Calu3 (cell line): ENCODE measurements at regions of chr1 and their contacts with region 1.

Region 1: GRCh38 chr1:110209715-110210603 is at the start of gene KCNC4:
- DNase-seq: peak; percentile 85
- H3K4me3 Mint-ChIP-seq: peak within 1 kb of the TSS; percentile 92
- H3K27ac Mint-ChIP-seq: peak within 1 kb of the TSS; percentile 72
- H3K4me1 Mint-ChIP-seq: peaks cover 30% of the 10 kb centered on the region
- H3K27me3 Mint-ChIP-seq: no peaks in the 10 kb centered on the region
- CTCF ChIP-seq: no peak
- total RNA-seq, gene KCNC4: 16.0 and 24.3 TPM in 2 replicates

Region 2: GRCh38 chr1:109509176-109510134 is 700.5 kb before region 1 on chr1 and contains the start of gene AMIGO1:
- CTCF ChIA-PET with region 1: no interaction called
- intact Hi-C with region 1: no loop called
- DNase-seq: peak; percentile 48
- H3K4me3 Mint-ChIP-seq: peak within 1 kb of the TSS; percentile 64
- H3K27ac Mint-ChIP-seq: peak within 1 kb of the TSS; percentile 58
- H3K4me1 Mint-ChIP-seq: peaks cover 9% of the 10 kb centered on the region
- H3K27me3 Mint-ChIP-seq: peaks cover 40% of the 10 kb centered on the region
- CTCF ChIP-seq: no peak
- total RNA-seq, gene AMIGO1: 1.3 and 1.5 TPM in 2 replicates

Region 3: GRCh38 chr1:110188035-110188618 is 21.8 kb before region 1 on chr1:
- CTCF ChIA-PET with region 1: no interaction called
- intact Hi-C with region 1: no loop called
- DNase-seq: no peak
- H3K4me3 Mint-ChIP-seq: no peak overlapping the region
- H3K27ac Mint-ChIP-seq: no peak overlapping the region
- H3K4me1 Mint-ChIP-seq: no peaks in the 10 kb centered on the region
- H3K27me3 Mint-ChIP-seq: peaks cover 50% of the 10 kb centered on the region
- CTCF ChIP-seq: no peak

Region 4: DNA sequence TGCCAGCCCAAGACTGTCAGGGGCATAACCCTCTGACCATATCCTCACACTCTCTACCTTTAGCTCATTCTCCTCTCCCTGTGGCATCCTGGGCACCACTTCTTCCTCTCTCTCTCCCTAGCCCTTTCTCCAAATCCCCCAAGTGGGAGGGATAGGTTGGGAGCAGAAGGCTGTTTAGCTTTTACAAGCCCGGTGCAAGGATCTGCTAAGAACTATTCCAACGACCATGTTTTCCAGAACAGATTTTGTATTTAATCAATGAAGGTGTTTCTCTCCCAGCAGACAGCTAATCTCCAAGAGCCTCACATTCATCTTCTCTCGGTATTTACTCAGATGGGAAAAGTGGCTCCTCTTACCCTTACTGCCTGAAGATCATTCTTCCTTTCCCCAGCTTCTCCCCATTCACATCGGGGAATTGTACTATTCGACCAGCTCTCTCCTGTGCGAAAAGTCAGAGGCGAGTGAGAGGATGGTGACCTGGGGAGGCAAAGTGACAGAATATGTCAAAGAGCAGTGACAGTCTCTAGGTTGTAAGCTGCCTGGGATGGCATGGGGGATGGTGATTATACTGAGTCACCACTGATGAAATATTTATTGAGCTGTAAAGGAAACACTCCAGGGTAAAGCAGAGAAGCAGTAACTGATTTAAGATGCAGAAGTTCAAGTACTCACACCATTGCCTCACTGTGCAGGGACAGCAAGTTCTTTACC is 82.2 kb after region 1 on chr1:
- CTCF ChIA-PET with region 1: no interaction called
- intact Hi-C with region 1: loop called (anchors 5 kb)
- DNase-seq: peak; percentile 14
- H3K4me3 Mint-ChIP-seq: no peak overlapping the region
- H3K27ac Mint-ChIP-seq: no peak overlapping the region
- H3K4me1 Mint-ChIP-seq: peaks cover 19% of the 10 kb centered on the region
- H3K27me3 Mint-ChIP-seq: no peaks in the 10 kb centered on the region
- CTCF ChIP-seq: no peak

Region 5: DNA sequence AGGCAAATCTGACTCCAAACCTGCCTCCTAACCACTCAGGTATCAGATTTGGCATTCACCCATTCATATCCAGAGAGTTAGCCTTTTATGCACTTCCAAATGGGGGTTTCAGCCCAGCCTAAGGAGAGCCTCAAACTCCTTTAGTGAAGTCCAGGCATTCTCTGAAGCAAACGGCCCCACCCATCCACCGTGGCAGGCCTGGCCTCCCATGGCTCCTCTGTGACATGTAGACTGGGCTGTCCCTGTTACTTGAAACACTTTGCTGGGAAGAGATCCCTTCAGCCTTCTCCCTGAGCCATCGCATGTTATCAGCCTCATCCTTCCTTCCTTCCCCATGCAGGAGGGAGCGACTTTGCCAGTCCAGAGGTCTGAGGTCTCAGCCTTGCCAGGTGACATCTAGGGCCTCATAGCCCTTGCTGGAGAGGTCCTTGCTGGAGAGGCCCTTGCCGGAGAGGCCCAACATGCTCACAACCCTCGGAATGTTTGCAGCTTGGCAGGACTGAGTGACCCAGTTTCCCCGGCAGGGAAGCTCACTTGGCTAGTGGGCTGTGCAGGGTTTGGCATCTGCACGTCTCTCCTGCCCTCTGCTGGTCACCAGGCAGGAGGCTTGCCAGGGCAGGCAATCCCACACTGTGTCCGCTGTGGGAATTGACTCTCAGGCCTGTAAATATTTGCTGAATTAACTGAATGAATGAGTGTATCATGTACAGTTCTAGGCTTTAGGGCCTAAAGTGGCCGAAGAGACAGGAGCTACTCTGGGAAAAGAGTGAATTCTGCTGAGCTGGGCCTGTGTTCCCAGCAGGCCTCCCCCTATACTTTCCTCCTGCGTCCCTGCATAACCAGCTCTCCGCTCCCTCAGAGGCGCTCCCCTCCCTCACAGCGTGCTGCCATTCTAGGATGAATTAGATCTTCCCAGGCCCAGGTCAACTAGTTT is 102.5 kb after region 1 on chr1:
- CTCF ChIA-PET with region 1: interaction called, 93 read pairs
- intact Hi-C with region 1: loop called (anchors 1 kb)
- DNase-seq: peak; percentile 78
- H3K4me3 Mint-ChIP-seq: no peak overlapping the region
- H3K27ac Mint-ChIP-seq: no peak overlapping the region
- H3K4me1 Mint-ChIP-seq: peaks cover 19% of the 10 kb centered on the region
- H3K27me3 Mint-ChIP-seq: no peaks in the 10 kb centered on the region
- CTCF ChIP-seq: peak; percentile 75

Region 6: DNA sequence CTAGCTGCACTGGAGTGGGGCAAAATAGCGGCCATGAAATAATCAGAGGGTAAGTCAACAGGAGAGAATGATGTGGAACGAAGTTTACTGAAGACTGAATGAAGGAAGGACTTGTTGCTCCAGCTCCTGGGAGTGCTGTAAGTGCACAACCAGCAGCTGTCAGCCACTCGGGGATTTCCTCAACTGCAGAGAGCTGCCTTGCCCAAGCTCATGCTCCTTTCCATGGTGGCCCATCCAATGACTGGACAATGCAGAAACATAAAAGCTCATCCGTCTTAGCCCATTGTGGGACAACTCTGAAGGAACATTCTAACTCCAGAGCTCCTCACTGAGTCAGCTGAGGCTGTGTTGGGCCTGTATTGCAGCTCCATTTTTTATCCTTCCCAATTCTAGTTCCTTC is 108.1 kb after region 1 on chr1:
- CTCF ChIA-PET with region 1: interaction called, 93 read pairs
- intact Hi-C with region 1: no loop called
- DNase-seq: no peak
- H3K4me3 Mint-ChIP-seq: no peak overlapping the region
- H3K27ac Mint-ChIP-seq: no peak overlapping the region
- H3K4me1 Mint-ChIP-seq: peaks cover 12% of the 10 kb centered on the region
- H3K27me3 Mint-ChIP-seq: no peaks in the 10 kb centered on the region
- CTCF ChIP-seq: no peak

Region 7: GRCh38 chr1:110360431-110360830 is 150.5 kb after region 1 on chr1:
- CTCF ChIA-PET with region 1: no interaction called
- intact Hi-C with region 1: no loop called
- DNase-seq: no peak
- H3K4me3 Mint-ChIP-seq: no peak overlapping the region
- H3K27ac Mint-ChIP-seq: no peak overlapping the region
- H3K4me1 Mint-ChIP-seq: peaks cover 13% of the 10 kb centered on the region
- H3K27me3 Mint-ChIP-seq: no peaks in the 10 kb centered on the region
- CTCF ChIP-seq: no peak

Region 8: DNA sequence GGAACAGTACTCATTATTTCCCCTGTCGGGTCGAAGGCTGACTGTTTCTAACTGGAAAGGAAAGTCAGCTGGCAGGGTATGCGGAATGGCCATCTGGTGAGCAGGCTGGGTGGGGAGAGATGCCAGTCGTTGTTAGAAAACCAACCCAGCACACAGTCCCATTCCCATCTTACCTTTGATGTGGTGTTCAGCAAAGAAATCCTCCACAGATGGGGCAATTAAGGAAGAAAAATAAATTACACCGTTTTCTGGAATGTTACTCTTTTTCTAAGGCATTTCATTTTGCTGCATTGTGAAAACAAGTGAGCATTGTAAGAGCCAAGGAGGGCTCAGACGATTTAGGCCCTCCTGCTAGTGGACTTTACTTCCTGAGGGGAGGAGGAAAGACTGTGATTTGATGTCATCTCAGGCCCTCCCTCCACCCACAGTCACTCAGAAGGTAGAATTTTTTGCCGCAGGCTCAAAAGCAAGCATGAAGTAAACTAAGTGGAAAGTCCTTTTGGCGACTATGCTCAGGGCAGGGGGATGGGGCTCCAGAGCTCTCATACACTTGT is 180.8 kb after region 1 on chr1 and contains the start of gene SLC16A4:
- CTCF ChIA-PET with region 1: no interaction called
- intact Hi-C with region 1: no loop called
- DNase-seq: no peak
- H3K4me3 Mint-ChIP-seq: no peak within 1 kb of the TSS
- H3K27ac Mint-ChIP-seq: no peak within 1 kb of the TSS
- H3K4me1 Mint-ChIP-seq: peaks cover 20% of the 10 kb centered on the region
- H3K27me3 Mint-ChIP-seq: no peaks in the 10 kb centered on the region
- CTCF ChIP-seq: no peak
- total RNA-seq, gene SLC16A4: 0.83 and 1.2 TPM in 2 replicates

Region 9: DNA sequence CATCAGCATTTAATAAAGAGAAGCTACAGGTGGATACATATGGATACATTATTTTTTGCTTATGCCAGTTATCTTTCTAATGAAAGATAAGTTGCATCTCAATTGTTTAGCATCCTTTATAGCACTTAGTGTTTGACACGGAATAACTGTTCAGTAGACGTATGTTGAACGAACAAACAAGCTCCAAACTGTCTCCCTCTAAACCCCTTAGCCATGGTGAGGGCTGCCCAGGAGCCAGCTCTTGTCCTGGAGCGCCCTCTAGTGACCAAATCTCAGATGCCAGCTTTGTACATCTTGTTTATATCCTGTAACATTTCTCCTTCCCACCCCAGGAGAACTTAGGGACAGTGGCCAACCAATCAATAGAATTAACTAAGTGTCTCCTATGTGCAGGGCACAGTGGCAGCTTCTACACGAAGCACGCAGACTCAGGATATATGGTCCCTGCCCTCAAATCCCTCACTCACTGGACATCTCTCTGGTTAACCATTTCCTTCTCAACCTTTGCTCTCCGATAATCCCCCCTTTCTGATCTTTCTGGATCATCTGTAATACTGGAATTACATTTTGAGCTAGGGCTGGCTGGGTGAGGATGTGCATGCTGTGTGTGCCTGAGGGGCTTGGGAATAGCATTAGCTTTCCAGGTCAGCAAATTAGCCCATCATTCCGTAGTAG is 286.1 kb after region 1 on chr1:
- CTCF ChIA-PET with region 1: interaction called, 13 read pairs
- intact Hi-C with region 1: no loop called
- DNase-seq: peak; percentile 79
- H3K4me3 Mint-ChIP-seq: no peak overlapping the region
- H3K27ac Mint-ChIP-seq: no peak overlapping the region
- H3K4me1 Mint-ChIP-seq: no peaks in the 10 kb centered on the region
- H3K27me3 Mint-ChIP-seq: peaks cover 36% of the 10 kb centered on the region
- CTCF ChIP-seq: peak; percentile 79

Region 10: DNA sequence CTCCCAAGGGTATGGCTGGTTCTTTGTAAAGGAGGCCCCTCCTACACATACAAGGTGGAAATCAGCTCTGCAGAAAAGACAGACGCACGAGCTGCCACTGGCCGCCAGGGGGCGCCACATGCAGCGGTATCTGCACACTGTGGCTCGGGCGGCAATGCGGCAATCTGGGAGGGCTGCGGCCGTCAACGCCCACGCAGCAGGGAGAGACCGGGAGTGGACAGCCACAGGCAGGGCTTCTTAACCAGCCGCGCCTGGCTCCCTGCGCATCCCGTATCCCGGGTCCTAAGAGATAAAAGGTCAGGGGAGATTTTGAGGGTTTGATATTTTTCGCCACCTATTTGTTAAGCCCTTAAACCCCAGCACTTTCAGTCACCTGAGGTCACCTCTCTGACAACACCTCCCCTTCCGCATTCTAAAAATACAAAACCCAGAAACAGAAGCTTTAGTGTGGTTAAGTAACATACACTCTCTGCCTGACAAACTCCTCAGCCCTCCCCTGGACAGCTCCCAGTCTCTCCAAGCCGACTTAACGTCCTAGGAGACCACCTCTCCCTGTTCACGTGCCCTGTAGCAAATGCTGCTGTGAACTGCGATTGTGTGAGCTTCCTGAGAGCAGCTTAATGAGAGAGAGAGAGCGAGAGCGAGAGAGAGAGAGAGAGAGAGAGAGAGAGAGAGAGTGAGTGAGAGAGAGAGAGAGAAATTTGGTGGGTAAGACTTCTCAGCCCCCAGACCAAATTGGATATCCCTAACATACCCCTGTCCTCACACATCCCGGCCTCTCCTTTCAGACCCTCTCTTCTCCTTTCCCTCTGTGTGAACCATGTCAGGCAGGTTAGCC is 409.7 kb after region 1 on chr1:
- CTCF ChIA-PET with region 1: no interaction called
- intact Hi-C with region 1: loop called (anchors 5 kb)
- DNase-seq: peak; percentile 86
- H3K4me3 Mint-ChIP-seq: peak overlapping the region; percentile 60
- H3K27ac Mint-ChIP-seq: no peak overlapping the region
- H3K4me1 Mint-ChIP-seq: peaks cover 25% of the 10 kb centered on the region
- H3K27me3 Mint-ChIP-seq: peaks cover 73% of the 10 kb centered on the region
- CTCF ChIP-seq: peak; percentile 72